ENCODE measurements at regions of chr7 and their contacts with region 1.

Region 1: GRCh38 chr7:92447345-92448204 is at the start of gene GATAD1:
- DNase-seq: peak; percentile 94
- ATAC-seq: peak; percentile 99
- total RNA-seq, gene GATAD1: 11.8 TPM

Region 2: GRCh38 chr7:91565499-91566401 is 881.8 kb before region 1 on chr7:
- intact Hi-C with region 1: no loop called
- DNase-seq: no peak
- ATAC-seq: no peak

Region 3: GRCh38 chr7:91826377-91826776 is 621.2 kb before region 1 on chr7:
- intact Hi-C with region 1: loop called (anchors 5 kb)
- DNase-seq: no peak
- ATAC-seq: no peak

Region 4: GRCh38 chr7:92134271-92135051 is 313.1 kb before region 1 on chr7 and contains the start of gene CYP51A1:
- intact Hi-C with region 1: loop called (anchors 1 kb)
- DNase-seq: peak; percentile 95
- ATAC-seq: peak; percentile 97
- total RNA-seq, gene CYP51A1: 19.3 TPM

Region 5: DNA sequence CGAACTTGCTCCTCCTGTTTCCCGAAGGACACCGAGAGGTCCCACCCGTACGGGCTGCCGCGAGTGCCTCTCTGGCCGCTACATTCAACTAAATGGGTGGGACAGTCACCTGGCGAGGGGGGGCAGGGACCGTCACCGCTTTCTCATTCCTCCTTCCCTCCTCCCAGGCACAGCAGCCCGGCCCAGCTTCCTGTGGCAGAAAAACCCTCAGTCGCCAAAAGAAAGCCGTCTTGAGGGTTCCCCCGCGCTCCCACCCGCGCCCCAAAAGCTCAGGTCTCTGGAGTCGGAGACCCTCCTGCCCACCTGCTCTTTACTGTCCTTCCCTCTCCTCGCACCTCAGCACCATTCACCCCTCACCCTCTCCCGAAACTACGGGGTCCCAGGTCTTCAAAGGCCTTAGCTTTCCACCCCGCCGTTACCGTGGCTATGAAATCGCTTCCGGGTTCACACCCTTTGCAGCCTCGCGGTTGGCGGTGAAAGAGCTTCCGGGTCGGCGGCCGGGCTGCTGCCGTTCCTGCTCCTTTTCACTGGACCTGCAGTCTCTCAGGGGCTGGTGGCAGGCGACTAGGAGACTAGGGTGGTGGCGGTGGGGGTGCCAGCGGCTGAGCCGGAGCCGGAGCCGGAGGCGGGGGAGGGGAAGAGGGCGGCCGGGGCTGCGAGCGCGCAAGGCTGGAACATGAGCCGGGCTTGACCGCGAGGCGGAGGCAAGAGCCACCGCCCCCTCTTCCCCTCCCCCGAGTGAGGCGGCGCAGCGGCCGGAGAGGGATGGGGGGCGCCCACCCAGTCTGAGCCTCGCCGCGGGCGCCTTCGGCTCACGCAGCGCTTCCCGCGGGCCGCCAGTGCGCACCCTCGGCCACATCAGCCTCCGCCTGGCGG is 201.8 kb before region 1 on chr7 and contains the starts of genes ANKIB1 and KRIT1:
- intact Hi-C with region 1: loop called (anchors 5 kb)
- DNase-seq: peak; percentile 94
- ATAC-seq: peak; percentile 92
- total RNA-seq, gene ANKIB1: 34.6 TPM
- total RNA-seq, gene KRIT1: 22.7 TPM

Region 6: DNA sequence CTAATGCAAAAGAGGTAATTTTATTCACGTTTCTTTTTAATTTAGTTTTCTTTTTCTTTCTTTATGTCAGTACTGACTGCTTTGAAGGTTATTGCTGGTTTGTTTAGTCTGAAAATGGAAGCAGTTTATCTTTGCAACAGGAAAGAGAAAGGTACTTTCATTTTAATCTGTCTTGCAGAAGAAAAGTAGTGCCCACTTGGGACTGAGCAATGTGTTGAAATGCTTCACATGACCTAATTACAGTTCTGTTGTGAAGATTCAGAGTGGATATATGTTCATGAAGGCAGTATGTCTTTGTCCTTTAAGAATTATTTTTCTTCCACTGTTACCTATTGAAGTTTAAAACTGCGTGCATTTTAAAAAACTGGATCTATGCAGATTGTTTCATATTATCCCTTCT is 121.7 kb before region 1 on chr7:
- intact Hi-C with region 1: no loop called
- DNase-seq: no peak
- ATAC-seq: no peak

Region 7: DNA sequence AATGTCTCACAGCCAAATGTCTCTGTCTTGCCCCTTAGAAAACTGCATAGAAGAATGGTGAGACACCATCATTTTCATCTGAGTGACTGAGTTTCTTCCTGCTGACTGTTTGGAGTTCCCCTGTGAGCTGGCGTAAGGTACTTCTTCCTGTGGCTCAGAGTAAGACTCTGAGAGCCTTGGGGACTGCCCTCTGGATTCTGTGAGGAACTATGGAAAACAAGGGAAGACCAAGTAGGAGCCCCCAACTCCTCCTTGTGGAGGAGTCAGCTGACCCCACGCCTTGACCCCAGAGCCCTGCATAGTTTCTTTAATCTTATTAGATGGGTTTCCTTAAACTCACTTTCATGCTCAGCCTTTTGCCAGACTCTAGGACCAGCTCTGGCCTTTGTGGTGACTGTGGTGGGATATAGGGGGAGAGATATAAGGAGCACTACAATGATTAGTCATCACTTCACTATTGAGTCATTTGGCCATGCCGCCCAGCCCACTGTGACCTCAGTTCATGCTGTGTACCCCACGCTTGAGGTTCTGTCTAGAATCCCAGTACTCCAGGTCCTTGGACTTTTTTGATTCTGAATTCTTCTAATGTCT is 194.4 kb after region 1 on chr7:
- intact Hi-C with region 1: no loop called
- DNase-seq: no peak
- ATAC-seq: no peak